ENCODE measurements at regions of chr16 and their contacts with region 1.

Region 1: GRCh38 chr16:66130296-66130905 is 236.1 kb upstream of the CDH5 start:
- DNase-seq: peak; percentile 83
- H3K4me3 ChIP-seq: no peak overlapping the region
- CTCF ChIP-seq: no peak

Region 2: GRCh38 chr16:66091471-66091891 is 38.9 kb before region 1 on chr16:
- in situ Hi-C with region 1: no loop called
- DNase-seq: no peak
- H3K4me3 ChIP-seq: no peak overlapping the region
- CTCF ChIP-seq: no peak

Region 3: DNA sequence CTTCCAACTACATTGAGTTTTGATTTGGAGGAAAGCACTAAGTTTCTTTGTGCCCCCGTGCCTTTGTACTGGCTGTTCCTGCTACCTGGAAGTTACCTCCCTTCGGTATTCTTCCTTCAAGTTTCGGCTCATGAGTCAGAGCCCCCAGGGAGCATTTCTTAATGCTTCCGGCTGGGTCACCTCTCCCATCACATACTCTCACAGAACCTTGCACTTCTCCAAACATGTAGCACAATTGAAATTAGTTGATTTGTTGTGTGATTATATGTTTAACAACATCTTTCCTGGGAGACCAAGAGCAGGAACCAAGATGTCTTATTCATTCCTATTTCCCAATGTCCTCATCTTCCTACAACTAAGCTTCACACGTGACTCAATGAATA is 77.5 kb after region 1 on chr16:
- in situ Hi-C with region 1: no loop called
- DNase-seq: no peak
- H3K4me3 ChIP-seq: no peak overlapping the region
- CTCF ChIP-seq: no peak

Region 4: GRCh38 chr16:66219491-66219890 is 89.1 kb after region 1 on chr16:
- in situ Hi-C with region 1: loop called (anchors 5 kb)
- DNase-seq: no peak
- H3K4me3 ChIP-seq: no peak overlapping the region
- CTCF ChIP-seq: no peak

Region 5: GRCh38 chr16:66270333-66270927 is 140.0 kb after region 1 on chr16:
- in situ Hi-C with region 1: loop called (anchors 5 kb)
- DNase-seq: no peak
- H3K4me3 ChIP-seq: no peak overlapping the region
- CTCF ChIP-seq: peak; percentile 71